Activated naive CD4-positive, alpha-beta T cell treated with anti-CD3 and anti-CD28 coated beads for 36 hours (primary cell): ENCODE measurements at regions of chr12 and their contacts with region 1.

Region 1: GRCh38 chr12:53321074-53321814 is at the start of gene AAAS:
- DNase-seq: peak; percentile 98
- H3K4me3 Mint-ChIP-seq: peak within 1 kb of the TSS; percentile 91
- H3K27ac Mint-ChIP-seq: peak within 1 kb of the TSS; percentile 97
- H3K4me1 Mint-ChIP-seq: peaks cover 38% of the 10 kb centered on the region
- H3K27me3 Mint-ChIP-seq: no peaks in the 10 kb centered on the region
- total RNA-seq, gene AAAS: 81.0 to 83.4 TPM

Region 2: GRCh38 chr12:53159195-53159839 is 161.9 kb before region 1 on chr12:
- CTCF ChIA-PET with region 1: interaction called, 13 read pairs
- intact Hi-C with region 1: loop called (anchors 1 kb)
- DNase-seq: peak; percentile 97
- H3K4me3 Mint-ChIP-seq: no peak overlapping the region
- H3K27ac Mint-ChIP-seq: peak overlapping the region; percentile 6
- H3K4me1 Mint-ChIP-seq: peaks cover 7% of the 10 kb centered on the region
- H3K27me3 Mint-ChIP-seq: no peaks in the 10 kb centered on the region

Region 3: GRCh38 chr12:53267999-53268647 is 53.1 kb before region 1 on chr12 and contains the start of gene ESPL1:
- CTCF ChIA-PET with region 1: interaction called, 23 read pairs
- intact Hi-C with region 1: loop called (anchors 1 kb)
- DNase-seq: peak; percentile 95
- H3K4me3 Mint-ChIP-seq: peak within 1 kb of the TSS; percentile 99
- H3K27ac Mint-ChIP-seq: peak within 1 kb of the TSS; percentile 99
- H3K4me1 Mint-ChIP-seq: peaks cover 22% of the 10 kb centered on the region
- H3K27me3 Mint-ChIP-seq: no peaks in the 10 kb centered on the region
- total RNA-seq, gene ESPL1: 53.3 to 54.2 TPM

Region 4: GRCh38 chr12:53344824-53345485 is 23.7 kb after region 1 on chr12:
- CTCF ChIA-PET with region 1: interaction called, 196 read pairs
- intact Hi-C with region 1: loop called (anchors 1 kb)
- DNase-seq: peak; percentile 86
- H3K4me3 Mint-ChIP-seq: peak overlapping the region; percentile 91
- H3K27ac Mint-ChIP-seq: no peak overlapping the region
- H3K4me1 Mint-ChIP-seq: peaks cover 9% of the 10 kb centered on the region
- H3K27me3 Mint-ChIP-seq: no peaks in the 10 kb centered on the region

Region 5: DNA sequence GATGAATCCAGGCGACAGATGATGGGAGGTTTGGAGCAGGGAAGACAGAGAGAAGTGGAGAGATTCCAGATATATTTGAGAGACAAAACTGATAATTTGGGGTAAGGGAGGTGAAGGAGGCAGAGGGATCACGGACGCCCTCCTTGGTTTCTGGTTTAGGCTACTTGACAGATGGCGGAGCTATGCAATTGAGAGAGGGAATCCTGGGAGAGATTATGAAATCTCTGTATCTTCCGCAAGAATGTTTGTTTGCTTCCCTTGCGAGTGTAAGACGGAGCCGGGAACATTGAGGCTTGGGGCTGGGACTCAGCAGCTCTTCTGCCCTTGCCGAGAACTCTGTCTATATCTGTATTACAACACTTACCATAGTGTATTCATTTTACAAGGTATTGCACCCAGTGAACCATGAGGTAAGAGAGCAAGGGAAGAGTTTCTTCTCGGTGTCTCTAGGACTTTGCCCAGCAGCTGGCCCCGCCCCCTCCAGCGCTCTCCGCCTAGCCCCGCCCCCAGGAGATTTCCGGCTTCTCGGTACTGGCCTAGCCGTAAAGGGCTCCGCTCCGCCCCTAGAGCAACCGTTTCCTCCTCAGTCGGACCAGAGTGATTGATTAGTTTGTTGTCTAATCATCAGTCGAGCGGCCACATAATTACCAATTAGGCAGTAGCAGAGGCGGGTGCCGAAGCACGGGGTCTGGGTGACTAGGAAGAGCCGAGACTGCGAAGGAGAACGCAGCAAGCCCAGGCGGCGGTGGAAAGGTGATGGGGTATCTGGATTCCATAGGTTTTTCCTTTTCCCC is 120.0 kb after region 1 on chr12 and contains the start of gene PRR13:
- CTCF ChIA-PET with region 1: interaction called, 3 read pairs
- intact Hi-C with region 1: loop called (anchors 1 kb)
- DNase-seq: peak; percentile 100
- H3K4me3 Mint-ChIP-seq: peak within 1 kb of the TSS; percentile 90
- H3K27ac Mint-ChIP-seq: peak within 1 kb of the TSS; percentile 98
- H3K4me1 Mint-ChIP-seq: peaks cover 38% of the 10 kb centered on the region
- H3K27me3 Mint-ChIP-seq: no peaks in the 10 kb centered on the region
- total RNA-seq, gene PRR13: 207 to 216 TPM

Region 6: DNA sequence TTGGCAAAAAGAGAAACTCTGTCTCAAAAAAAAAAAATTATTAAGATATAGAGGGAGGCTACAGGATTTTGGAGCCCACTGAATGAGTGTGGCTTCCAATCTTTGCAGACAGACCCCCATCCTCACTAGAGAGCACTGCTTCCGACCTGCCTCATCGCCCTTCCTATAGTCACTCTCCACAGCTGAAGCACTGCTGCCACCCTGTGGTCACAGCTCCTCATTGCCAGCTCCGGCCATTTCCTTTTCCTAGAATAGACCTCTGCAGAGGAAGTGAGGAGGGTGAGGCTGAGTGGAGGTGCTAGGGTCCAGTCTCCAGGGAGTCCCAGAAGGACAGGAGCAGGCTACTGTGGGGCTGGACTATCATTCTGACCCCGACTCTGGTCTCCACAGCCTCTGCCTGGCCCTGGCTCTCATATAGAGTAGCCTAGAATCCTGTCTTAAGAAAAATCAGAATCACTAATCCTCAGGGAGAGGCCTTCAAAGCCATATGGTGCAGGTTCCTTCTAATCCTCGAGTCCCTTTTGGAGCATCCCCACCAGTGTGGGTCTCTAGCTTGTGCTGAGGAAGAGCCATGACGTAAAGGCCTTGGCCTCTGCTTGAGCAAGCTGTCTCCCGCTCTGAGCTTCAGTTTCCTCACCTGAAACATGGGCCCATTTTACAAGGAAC is 187.4 kb after region 1 on chr12:
- CTCF ChIA-PET with region 1: interaction called, 14 read pairs
- intact Hi-C with region 1: loop called (anchors 1 kb)
- DNase-seq: peak; percentile 93
- H3K4me3 Mint-ChIP-seq: no peak overlapping the region
- H3K27ac Mint-ChIP-seq: peak overlapping the region; percentile 10
- H3K4me1 Mint-ChIP-seq: peaks cover 11% of the 10 kb centered on the region
- H3K27me3 Mint-ChIP-seq: no peaks in the 10 kb centered on the region

Region 7: DNA sequence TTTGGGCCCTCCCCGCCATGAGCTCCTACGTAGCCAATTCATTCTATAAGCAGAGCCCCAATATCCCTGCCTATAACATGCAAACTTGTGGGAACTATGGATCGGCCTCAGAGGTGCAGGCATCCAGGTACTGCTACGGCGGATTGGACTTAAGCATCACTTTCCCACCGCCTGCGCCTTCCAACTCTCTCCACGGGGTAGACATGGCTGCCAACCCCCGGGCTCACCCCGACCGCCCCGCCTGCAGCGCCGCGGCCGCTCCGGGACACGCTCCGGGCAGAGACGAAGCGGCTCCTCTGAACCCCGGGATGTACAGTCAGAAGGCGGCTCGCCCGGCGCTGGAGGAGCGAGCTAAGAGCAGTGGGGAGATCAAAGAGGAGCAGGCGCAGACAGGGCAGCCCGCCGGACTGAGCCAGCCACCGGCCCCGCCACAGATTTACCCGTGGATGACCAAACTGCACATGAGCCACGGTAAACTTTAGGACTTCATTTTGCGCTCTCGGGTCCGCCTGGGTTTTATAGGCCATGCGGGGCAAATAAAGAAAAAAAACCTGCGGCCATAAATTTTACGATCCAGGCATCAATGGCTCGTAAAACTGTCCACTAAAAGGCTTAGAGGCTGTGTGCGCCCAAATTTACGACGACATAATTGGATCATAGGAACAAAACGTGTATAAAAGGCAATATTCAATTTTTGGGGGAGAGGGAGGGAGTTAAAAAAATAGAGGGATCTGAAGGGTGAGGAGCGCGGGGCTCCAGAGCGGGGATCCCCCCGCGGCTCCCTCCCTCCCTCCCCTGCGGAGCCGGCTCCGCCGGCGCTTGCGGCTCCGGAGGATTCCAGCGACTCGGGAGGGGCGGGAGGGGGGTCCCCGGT is 712.1 kb after region 1 on chr12:
- CTCF ChIA-PET with region 1: no interaction called
- intact Hi-C with region 1: no loop called
- DNase-seq: no peak
- H3K4me3 Mint-ChIP-seq: peak overlapping the region; percentile 34
- H3K27ac Mint-ChIP-seq: no peak overlapping the region
- H3K4me1 Mint-ChIP-seq: peaks cover 25% of the 10 kb centered on the region
- H3K27me3 Mint-ChIP-seq: peaks cover 71% of the 10 kb centered on the region